ENCODE measurements at regions of chr22 and their contacts with region 1.

Region 1: GRCh38 chr22:44423561-44424358 is 74.3 kb downstream of the RTL6 start:
- DNase-seq: no peak

Region 2: DNA sequence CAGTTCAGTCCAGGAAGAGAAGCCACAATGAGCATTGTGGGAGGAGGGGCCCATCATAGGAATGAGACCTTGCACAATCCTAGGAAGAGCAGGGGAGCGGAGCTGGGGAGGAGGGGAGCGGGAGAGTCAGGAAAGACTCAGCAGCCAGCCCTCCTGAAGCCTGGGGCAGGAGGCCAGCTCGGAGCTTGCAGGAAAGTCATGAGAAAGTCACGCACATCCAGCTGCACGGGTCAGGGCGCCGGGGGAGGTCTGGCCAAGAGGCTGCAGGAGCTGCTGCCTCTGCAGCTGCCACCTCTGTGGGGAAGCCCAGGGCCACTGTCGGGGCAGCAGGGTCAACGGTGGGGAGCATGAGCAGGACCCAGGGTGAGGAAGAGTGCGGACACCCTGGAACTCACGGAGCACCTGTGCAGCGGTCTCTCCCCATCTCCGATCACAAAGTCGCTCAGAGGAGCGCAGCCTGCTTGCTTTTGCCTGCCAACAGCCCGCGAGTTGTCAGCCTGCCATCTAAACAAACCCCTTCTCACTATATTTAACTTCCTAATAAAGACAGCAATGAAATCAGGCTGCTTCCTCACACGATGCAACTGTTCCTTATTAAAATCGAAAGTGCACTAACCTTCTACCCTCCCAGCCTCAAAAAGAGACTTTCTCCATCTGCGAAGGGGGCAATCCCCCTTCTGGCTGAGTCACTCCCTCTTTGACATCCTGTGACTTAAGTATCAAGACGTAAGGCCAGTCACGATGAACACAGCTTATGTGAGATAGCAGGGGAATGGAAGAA is 127.1 kb after region 1 on chr22:
- CTCF ChIA-PET with region 1: interaction called, 12 read pairs
- POLR2A ChIA-PET with region 1: no interaction called
- DNase-seq: no peak